GM12878 (cell line): ENCODE measurements at regions of chr19 and their contacts with region 1.

Region 1: GRCh38 chr19:6590827-6591319 is at the start of gene CD70:
- DNase-seq: peak; percentile 88
- ATAC-seq: peak; percentile 66
- H3K4me3 ChIP-seq: peak within 1 kb of the TSS; percentile 100
- H3K27ac ChIP-seq: peak within 1 kb of the TSS; percentile 93
- H3K4me1 ChIP-seq: peaks cover 34% of the 10 kb centered on the region
- H3K27me3 ChIP-seq: no peaks in the 10 kb centered on the region
- CTCF ChIP-seq: no peak
- EP300 ChIP-seq: peak in 1 of 2 experiments; percentile 57; a peak in 1 of 4 replicates
- POLR2A ChIP-seq: peak; percentile 96
- RAD21 ChIP-seq: 0 out of 2 replicates have a peak, but pooled peaks have one; percentile 1
- polyA plus RNA-seq, gene CD70: 16.4 to 35.8 TPM

Region 2: DNA sequence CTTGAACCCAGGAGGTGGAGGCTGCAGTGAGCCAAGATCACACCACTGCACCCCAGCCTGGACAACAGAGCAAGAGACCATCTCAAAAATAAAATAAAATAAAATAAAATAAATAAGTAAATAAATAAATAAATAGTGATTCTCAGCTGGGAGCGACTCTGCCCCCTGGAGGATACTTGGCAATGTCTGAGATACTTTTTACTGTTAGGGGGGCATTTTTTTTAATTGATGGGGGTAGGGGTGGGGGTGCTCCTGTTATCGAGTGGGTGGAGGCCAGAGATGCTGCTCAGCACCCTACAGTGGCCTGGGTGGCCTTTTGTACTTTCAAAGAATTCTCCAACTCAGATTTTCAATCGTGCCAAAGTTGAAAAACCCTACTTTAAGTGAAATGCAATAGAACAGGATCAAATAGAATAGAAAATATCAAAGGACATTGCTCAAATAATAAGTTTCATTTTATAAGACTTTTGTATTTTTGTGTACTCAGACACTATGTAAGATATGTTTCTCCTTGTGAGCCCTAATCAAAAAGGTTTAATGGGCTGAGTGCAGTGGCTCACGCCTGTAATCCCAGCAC is 236.7 kb before region 1 on chr19:
- CTCF ChIA-PET with region 1: no interaction called
- POLR2A ChIA-PET with region 1: no interaction called
- RAD21 ChIA-PET with region 1: no interaction called
- SMC1A ChIA-PET with region 1: no interaction called
- in situ Hi-C with region 1: no loop called
- intact Hi-C with region 1: no loop called
- DNase-seq: no peak
- ATAC-seq: no peak
- H3K4me3 ChIP-seq: no peak overlapping the region
- H3K27ac ChIP-seq: no peak overlapping the region
- H3K4me1 ChIP-seq: no peaks in the 10 kb centered on the region
- H3K27me3 ChIP-seq: no peaks in the 10 kb centered on the region
- CTCF ChIP-seq: peak in 1 of 3 experiments; percentile 18; a peak in 2 of 6 replicates
- EP300 ChIP-seq: no peak
- POLR2A ChIP-seq: no peak
- RAD21 ChIP-seq: peak; percentile 30

Region 3: DNA sequence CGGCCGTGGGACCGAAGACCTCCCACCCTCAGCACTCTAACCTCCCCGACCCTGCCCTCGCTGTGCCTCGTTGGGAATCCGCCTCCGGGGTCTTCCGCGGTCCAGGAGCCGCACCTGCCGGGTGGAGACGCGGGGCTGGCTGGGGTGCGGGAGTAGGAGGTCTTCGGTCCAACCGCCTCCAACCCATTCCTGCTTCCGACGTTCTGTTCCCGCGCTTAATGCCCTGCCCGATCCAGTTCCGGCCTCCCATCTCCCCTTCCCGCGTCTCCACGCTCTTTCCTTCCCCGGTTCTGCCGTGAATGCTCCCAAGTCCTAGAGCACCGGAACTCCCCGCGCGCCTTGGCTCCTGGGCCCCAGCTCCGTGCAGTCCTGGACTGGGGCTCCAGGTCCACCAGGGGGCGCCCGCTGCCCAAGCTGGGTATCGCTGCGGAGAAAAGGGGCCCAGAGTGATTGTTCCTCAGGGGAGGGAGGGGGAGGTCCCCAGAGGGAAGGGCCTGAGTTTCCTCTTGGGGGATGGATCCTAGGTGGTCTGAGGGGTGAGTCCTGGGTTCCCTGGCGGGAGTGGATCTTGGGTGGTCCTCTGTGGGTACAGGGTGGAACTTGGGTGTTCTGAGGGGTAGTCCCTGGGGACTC is 74.1 kb before region 1 on chr19:
- CTCF ChIA-PET with region 1: interaction called, 8 read pairs
- POLR2A ChIA-PET with region 1: interaction called, 9 read pairs
- RAD21 ChIA-PET with region 1: interaction called, 26 read pairs
- SMC1A ChIA-PET with region 1: interaction called, 14 read pairs
- in situ Hi-C with region 1: loop called (anchors 5 kb)
- intact Hi-C with region 1: loop called (anchors 2 kb)
- DNase-seq: no peak
- ATAC-seq: peak; percentile 83
- H3K4me3 ChIP-seq: peak overlapping the region; percentile 92
- H3K27ac ChIP-seq: peak overlapping the region; percentile 98
- H3K4me1 ChIP-seq: peaks cover 33% of the 10 kb centered on the region
- H3K27me3 ChIP-seq: no peaks in the 10 kb centered on the region
- CTCF ChIP-seq: peak; percentile 96 to 99 (median 97); a peak in 5 of 6 replicates
- EP300 ChIP-seq: 0 out of 4 replicates have a peak, but pooled peaks of 1 of the 2 experiments have one; percentile 13
- POLR2A ChIP-seq: peak; percentile 63; the same call in 1 of the 2 replicates
- RAD21 ChIP-seq: peak; percentile 100

Region 4: DNA sequence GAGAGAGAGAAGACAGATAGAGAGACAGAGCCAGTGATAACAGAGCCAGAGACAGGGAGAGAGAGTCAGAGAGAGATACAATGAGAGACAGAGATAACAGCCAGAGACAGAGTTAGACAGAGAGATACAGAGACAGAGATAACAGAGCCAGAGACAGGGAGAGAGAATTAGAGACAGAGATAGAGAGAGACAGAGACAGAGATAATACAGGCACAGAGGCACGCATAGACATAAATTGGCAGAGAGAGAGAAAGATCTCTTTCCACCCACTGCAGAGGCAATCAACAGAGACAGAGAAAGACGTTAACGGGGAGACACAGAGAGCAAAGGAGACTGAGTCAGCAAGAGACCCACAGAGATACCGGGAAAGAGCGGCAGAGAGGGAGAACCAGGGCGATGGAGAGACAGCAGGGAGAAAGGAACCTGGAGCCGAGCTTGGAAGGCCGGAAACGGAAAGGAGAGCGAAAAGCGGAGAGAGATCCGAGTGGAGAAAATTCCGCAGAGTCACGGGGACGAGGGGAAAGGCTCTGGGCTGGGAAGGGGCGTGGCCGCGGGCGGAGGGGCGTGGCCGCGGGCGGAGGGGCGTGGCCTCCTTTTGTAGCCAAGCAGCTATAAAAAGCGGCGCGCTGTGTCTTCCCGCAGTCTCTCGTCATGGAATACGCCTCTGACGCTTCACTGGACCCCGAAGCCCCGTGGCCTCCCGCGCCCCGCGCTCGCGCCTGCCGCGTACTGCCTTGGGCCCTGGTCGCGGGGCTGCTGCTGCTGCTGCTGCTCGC is 60.3 kb before region 1 on chr19 and contains the start of gene TNFSF9:
- CTCF ChIA-PET with region 1: interaction called, 6 read pairs
- POLR2A ChIA-PET with region 1: interaction called, 12 read pairs
- RAD21 ChIA-PET with region 1: interaction called, 17 read pairs
- SMC1A ChIA-PET with region 1: interaction called, 5 read pairs
- in situ Hi-C with region 1: no loop called
- intact Hi-C with region 1: no loop called
- DNase-seq: no peak
- ATAC-seq: peak; percentile 55
- H3K4me3 ChIP-seq: peak within 1 kb of the TSS; percentile 99
- H3K27ac ChIP-seq: peak within 1 kb of the TSS; percentile 83
- H3K4me1 ChIP-seq: peaks cover 34% of the 10 kb centered on the region
- H3K27me3 ChIP-seq: no peaks in the 10 kb centered on the region
- CTCF ChIP-seq: no peak
- EP300 ChIP-seq: no peak
- POLR2A ChIP-seq: peak; percentile 98
- RAD21 ChIP-seq: no peak
- polyA plus RNA-seq, gene TNFSF9: 6.2 to 12.8 TPM

Region 5: DNA sequence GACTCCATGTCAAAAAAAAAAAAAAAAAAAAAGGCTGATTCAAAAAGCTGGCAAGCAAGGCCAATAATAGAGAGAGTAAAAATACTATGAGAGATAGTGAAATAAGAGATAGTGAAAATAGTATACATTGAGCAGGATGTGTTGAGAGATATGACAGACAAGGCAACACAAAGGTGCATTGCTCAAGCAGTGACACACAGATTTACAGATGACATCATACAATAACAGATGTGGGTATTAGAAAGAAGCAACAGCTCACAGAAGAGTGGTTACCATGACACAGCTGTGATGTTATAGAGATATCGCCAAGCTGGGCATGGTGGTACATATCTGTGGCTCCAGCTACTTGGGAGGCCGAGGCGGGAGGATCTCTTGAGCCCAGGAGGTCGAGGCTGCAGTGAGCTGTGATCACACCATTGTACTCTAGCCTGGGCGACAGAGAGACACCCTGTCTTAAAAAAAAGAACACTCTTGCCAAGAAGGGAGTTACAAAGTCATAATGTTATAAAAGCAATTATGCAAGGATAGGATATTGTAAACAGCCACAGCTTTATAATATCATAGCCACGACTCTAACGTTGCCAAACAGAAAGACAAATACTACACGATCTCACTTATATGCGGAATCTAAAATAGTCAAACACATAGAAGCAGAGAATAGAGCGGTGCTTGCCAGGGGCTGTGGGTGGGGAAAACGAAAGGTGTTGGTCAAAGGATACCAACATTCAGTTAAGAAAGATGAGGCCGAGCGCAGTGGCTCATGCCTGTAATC is 49.8 kb before region 1 on chr19:
- CTCF ChIA-PET with region 1: interaction called, 6 read pairs
- POLR2A ChIA-PET with region 1: interaction called, 11 read pairs
- RAD21 ChIA-PET with region 1: interaction called, 17 read pairs
- SMC1A ChIA-PET with region 1: interaction called, 4 read pairs
- in situ Hi-C with region 1: no loop called
- intact Hi-C with region 1: loop called (anchors 2 kb)
- DNase-seq: no peak
- ATAC-seq: no peak
- H3K4me3 ChIP-seq: no peak overlapping the region
- H3K27ac ChIP-seq: no peak overlapping the region
- H3K4me1 ChIP-seq: peaks cover 40% of the 10 kb centered on the region
- H3K27me3 ChIP-seq: no peaks in the 10 kb centered on the region
- CTCF ChIP-seq: no peak
- EP300 ChIP-seq: no peak
- POLR2A ChIP-seq: no peak; the same call in 1 of the 2 replicates
- RAD21 ChIP-seq: no peak

Region 6: GRCh38 chr19:6577476-6578125 is 13.3 kb before region 1 on chr19:
- CTCF ChIA-PET with region 1: interaction called, 10 read pairs
- POLR2A ChIA-PET with region 1: interaction called, 40 read pairs
- RAD21 ChIA-PET with region 1: interaction called, 24 read pairs
- SMC1A ChIA-PET with region 1: interaction called, 30 read pairs
- in situ Hi-C with region 1: no loop called
- intact Hi-C with region 1: loop called (anchors 1 kb)
- DNase-seq: peak; percentile 96
- ATAC-seq: peak; percentile 89
- H3K4me3 ChIP-seq: peak overlapping the region; percentile 26; the same call in 1 of the 2 replicates
- H3K27ac ChIP-seq: peak overlapping the region; percentile 99
- H3K4me1 ChIP-seq: peaks cover 50% of the 10 kb centered on the region
- H3K27me3 ChIP-seq: no peaks in the 10 kb centered on the region
- CTCF ChIP-seq: no peak
- EP300 ChIP-seq: peak; percentile 81 to 98
- POLR2A ChIP-seq: peak; percentile 69
- RAD21 ChIP-seq: no peak

Region 7: GRCh38 chr19:6723108-6723618 is 132.3 kb after region 1 on chr19:
- CTCF ChIA-PET with region 1: no interaction called
- POLR2A ChIA-PET with region 1: no interaction called
- RAD21 ChIA-PET with region 1: no interaction called
- SMC1A ChIA-PET with region 1: no interaction called
- in situ Hi-C with region 1: no loop called
- intact Hi-C with region 1: no loop called
- DNase-seq: no peak
- ATAC-seq: no peak
- H3K4me3 ChIP-seq: no peak overlapping the region
- H3K27ac ChIP-seq: no peak overlapping the region
- H3K4me1 ChIP-seq: peaks cover 35% of the 10 kb centered on the region
- H3K27me3 ChIP-seq: no peaks in the 10 kb centered on the region
- CTCF ChIP-seq: no peak
- EP300 ChIP-seq: no peak
- POLR2A ChIP-seq: no peak
- RAD21 ChIP-seq: no peak

Region 8: GRCh38 chr19:6737284-6738046 is 146.6 kb after region 1 on chr19 and contains the start of gene GPR108:
- CTCF ChIA-PET with region 1: interaction called, 4 read pairs
- POLR2A ChIA-PET with region 1: interaction called, 3 read pairs
- RAD21 ChIA-PET with region 1: interaction called, 7 read pairs
- SMC1A ChIA-PET with region 1: interaction called, 5 read pairs
- in situ Hi-C with region 1: no loop called
- intact Hi-C with region 1: loop called (anchors 2 kb)
- DNase-seq: peak; percentile 100
- ATAC-seq: peak; percentile 82
- H3K4me3 ChIP-seq: peak within 1 kb of the TSS; percentile 100
- H3K27ac ChIP-seq: peak within 1 kb of the TSS; percentile 92
- H3K4me1 ChIP-seq: peaks cover 30% of the 10 kb centered on the region
- H3K27me3 ChIP-seq: no peaks in the 10 kb centered on the region
- CTCF ChIP-seq: no peak
- EP300 ChIP-seq: no peak
- POLR2A ChIP-seq: peak; percentile 66
- RAD21 ChIP-seq: no peak
- polyA plus RNA-seq, gene GPR108: 4.4 to 17.6 TPM

Region 9: DNA sequence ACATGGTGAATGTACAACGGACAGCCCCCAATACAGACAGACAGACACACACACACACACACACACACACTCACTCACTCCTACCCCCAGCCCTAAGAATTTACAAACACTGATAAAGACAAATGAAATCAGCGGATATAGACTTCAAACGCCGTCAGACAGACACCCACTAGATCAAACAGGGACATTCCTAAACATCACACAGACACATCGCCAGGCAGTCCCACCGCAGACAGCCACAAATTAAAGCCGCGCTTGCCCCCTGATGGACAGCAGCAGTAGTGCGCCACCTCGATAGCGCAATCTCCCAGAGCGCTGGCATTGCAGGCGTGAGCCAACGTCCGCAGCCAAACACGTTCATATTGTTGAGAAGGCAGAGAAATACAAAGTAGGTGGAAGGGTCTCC is 271.8 kb after region 1 on chr19:
- CTCF ChIA-PET with region 1: no interaction called
- POLR2A ChIA-PET with region 1: no interaction called
- RAD21 ChIA-PET with region 1: interaction called, 8 read pairs
- SMC1A ChIA-PET with region 1: interaction called, 3 read pairs
- in situ Hi-C with region 1: no loop called
- intact Hi-C with region 1: loop called (anchors 5 kb)
- DNase-seq: peak; percentile 80
- ATAC-seq: peak; percentile 94
- H3K4me3 ChIP-seq: peak overlapping the region; percentile 67; the same call in 1 of the 2 replicates
- H3K27ac ChIP-seq: peak overlapping the region; percentile 56; the same call in 1 of the 2 replicates
- H3K4me1 ChIP-seq: peaks cover 11% of the 10 kb centered on the region
- H3K27me3 ChIP-seq: no peaks in the 10 kb centered on the region
- CTCF ChIP-seq: peak; percentile 92 to 99 (median 99); a peak in 5 of 6 replicates
- EP300 ChIP-seq: no peak
- POLR2A ChIP-seq: peak; percentile 65
- RAD21 ChIP-seq: peak; percentile 88